GM18951 (cell line): ENCODE measurements at regions of chr12 and their contacts with region 1.

Region 1: DNA sequence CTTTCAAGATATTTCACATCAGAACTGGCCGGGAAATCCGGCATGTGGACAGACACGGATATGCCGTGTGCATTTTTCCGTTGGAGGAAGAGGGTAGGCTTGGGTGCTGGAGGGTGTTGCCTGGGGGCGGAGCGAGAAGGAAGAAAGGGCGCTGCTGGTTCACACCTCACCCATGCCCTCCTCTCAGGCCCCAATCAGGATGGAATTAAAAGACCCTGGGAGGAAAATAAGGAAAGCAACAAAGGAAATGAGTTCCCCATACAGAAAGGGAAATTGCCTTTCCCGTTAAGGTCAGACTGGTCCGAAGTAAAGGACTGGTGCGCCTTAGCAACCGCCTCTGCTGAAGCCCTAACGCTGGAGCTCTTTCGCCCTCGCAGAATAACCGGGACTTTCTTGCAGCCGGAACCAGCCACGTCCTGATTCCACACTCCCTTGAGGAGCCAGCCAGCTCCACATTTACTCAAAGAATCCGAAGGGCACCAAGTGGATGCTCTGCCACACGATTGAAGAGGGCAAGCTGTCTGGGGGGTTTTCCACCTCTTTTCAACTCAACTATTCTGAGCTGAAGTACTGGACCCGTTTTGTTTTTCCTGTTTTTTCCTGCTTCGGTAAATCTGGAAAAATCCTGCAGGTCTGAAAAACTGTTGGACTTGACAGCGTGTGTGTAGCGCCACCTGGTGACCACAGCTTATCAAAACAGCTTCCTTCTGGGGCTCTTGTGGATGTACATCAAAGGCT is 37.7 kb upstream of the BCL2L14 start:
- POLR2A ChIP-seq: no peak

Region 2: GRCh38 chr12:11553871-11554533 is 479.0 kb before region 1 on chr12:
- in situ Hi-C with region 1: loop called (anchors 10 kb)
- POLR2A ChIP-seq: no peak

Region 3: DNA sequence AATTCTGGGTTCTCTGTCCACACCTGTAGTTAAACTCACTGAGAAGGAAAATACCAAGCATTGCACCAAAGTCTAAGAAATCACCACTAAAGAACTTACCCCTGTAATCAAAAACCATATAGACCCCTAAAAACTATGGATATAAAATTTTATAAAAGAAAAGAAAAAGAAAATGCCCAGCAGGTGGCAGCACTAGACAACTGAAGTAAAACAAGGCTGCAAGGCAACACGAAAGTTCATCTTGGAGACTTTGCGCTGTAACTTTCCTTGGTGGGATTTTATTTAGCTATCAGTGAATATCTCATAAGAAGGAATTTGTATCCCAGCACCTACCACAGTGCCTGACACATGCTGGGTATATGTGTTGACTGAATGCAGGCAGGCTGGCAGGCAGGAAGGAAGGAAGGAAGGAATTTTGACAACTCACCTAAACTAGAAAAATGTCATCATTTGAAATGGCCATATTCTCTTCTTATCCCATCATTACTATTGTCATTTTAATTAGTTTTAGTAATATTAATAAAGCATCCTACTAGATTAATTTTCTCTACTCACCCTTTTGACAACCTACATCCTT is 451.8 kb before region 1 on chr12:
- in situ Hi-C with region 1: loop called (anchors 10 kb)
- POLR2A ChIP-seq: no peak

Region 4: GRCh38 chr12:11648831-11649702 is 384.0 kb before region 1 on chr12 and contains the start of gene ETV6:
- in situ Hi-C with region 1: no loop called
- POLR2A ChIP-seq: peak; percentile 61

Region 5: DNA sequence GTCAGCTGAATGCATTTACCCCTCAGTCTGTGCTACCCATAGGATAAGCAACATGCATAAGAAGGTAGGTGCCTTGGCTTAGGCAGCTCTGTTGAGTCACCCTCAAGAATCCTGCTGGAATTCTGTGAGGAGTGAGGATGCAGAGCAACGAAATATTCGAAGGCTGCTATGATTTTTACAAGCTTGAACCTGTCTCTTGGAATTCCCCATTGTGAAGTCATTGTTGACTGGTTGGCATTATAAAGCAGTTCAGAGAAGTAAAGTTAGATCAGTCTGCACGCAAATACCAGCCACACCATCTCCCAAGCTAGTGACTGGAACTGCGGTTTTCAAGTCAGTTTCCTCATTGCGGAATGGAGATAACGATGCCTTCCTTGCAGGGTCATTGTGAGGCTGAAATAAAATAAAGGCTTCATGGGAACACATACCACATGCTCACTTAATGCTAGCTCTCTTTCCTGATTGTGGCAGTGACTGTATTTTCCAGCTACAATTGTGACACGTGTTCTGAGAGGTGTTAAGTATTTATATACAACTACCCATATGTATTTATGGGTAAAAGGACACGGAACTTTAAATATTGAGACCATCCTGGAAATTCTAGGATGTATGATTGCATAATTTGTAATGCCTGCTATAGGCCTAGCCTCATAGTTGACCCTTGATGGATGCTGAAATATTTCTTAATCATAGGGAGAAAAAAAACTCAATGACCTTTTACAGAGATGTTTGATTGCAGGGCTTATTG is 286.8 kb before region 1 on chr12:
- in situ Hi-C with region 1: no loop called
- POLR2A ChIP-seq: no peak